ENCODE measurements at regions of chr4 and their contacts with region 1.

Region 1: GRCh38 chr4:89640620-89641366 is 196.2 kb downstream of the SNCA start:
- DNase-seq: peak; percentile 87
- ATAC-seq: peak; percentile 99
- H3K4me3 Mint-ChIP-seq: peak overlapping the region; percentile 55
- H3K27ac Mint-ChIP-seq: no peak overlapping the region; the same call in 1 of the 2 replicates
- H3K4me1 Mint-ChIP-seq: peaks cover 7% of the 10 kb centered on the region
- H3K27me3 Mint-ChIP-seq: peaks cover 3% of the 10 kb centered on the region; the same call in 1 of the 2 replicates
- CTCF ChIP-seq: peak; percentile 76

Region 2: DNA sequence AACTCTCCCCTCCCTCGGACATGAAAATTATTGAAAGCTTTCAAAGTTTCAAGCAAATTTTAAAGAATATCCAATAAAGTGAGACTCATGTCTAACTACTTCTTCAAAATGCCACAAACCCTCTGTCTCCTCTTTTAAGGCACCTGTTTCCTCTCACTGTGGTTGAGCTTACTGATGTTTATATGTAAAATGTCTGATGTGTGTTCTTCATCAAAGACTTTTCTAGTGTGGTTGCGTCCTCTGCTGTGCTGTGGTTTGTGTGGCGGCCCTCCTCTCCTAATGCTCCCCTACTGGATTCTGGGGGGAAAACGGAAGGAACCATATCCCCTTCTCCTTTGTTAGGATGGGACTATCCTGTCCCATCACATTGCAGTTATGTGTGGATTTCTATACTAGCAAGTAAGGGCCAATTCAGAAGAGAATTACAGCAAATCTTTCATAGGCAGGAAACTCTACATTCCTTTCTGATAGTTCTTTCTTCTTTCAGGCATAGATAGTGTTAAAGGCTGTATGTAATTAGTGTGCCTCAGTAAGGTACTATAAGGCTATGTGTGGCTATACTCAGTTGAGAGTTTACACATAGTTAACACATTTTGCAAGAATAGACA is 112.2 kb before region 1 on chr4:
- CTCF ChIA-PET with region 1: no interaction called
- POLR2A ChIA-PET with region 1: no interaction called
- DNase-seq: no peak
- ATAC-seq: no peak
- H3K4me3 Mint-ChIP-seq: no peak overlapping the region
- H3K27ac Mint-ChIP-seq: no peak overlapping the region
- H3K4me1 Mint-ChIP-seq: no peaks in the 10 kb centered on the region
- H3K27me3 Mint-ChIP-seq: peaks cover 6% of the 10 kb centered on the region; the same call in 1 of the 2 replicates
- CTCF ChIP-seq: no peak

Region 3: DNA sequence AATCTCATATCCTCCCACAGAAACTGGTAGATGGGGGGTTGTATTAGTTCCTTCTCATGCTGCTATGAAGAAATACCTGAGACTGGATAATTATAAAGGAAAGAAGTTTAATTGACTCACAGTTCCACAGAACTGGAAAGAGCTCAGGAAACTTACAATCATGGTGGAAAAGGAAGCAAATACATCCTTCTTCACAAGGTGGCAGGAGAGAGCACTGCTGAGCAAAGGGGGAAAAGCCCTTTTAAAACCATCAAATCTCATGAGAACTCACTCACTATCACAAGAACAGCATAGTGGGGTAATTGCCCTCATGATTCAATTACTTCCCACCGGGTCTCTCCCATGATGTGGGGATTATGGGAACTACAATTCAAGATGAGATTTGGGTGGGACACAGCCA is 82.6 kb before region 1 on chr4:
- CTCF ChIA-PET with region 1: interaction called, 19 read pairs
- POLR2A ChIA-PET with region 1: no interaction called
- DNase-seq: no peak
- ATAC-seq: 0 out of 2 replicates have a peak, but pooled peaks have one; percentile 33
- H3K4me3 Mint-ChIP-seq: no peak overlapping the region
- H3K27ac Mint-ChIP-seq: no peak overlapping the region
- H3K4me1 Mint-ChIP-seq: peaks cover 22% of the 10 kb centered on the region
- H3K27me3 Mint-ChIP-seq: peaks cover 34% of the 10 kb centered on the region
- CTCF ChIP-seq: no peak

Region 4: GRCh38 chr4:89625599-89626298 is 15.0 kb before region 1 on chr4:
- CTCF ChIA-PET with region 1: interaction called, 15 read pairs
- POLR2A ChIA-PET with region 1: no interaction called
- DNase-seq: no peak
- ATAC-seq: no peak
- H3K4me3 Mint-ChIP-seq: no peak overlapping the region
- H3K27ac Mint-ChIP-seq: no peak overlapping the region
- H3K4me1 Mint-ChIP-seq: no peaks in the 10 kb centered on the region
- H3K27me3 Mint-ChIP-seq: no peaks in the 10 kb centered on the region
- CTCF ChIP-seq: no peak

Region 5: GRCh38 chr4:89657931-89658700 is 17.3 kb after region 1 on chr4:
- CTCF ChIA-PET with region 1: interaction called, 17 read pairs
- POLR2A ChIA-PET with region 1: no interaction called
- DNase-seq: no peak
- ATAC-seq: 0 out of 2 replicates have a peak, but pooled peaks have one; percentile 38
- H3K4me3 Mint-ChIP-seq: no peak overlapping the region
- H3K27ac Mint-ChIP-seq: no peak overlapping the region
- H3K4me1 Mint-ChIP-seq: peaks cover 11% of the 10 kb centered on the region
- H3K27me3 Mint-ChIP-seq: no peaks in the 10 kb centered on the region
- CTCF ChIP-seq: no peak

Region 6: DNA sequence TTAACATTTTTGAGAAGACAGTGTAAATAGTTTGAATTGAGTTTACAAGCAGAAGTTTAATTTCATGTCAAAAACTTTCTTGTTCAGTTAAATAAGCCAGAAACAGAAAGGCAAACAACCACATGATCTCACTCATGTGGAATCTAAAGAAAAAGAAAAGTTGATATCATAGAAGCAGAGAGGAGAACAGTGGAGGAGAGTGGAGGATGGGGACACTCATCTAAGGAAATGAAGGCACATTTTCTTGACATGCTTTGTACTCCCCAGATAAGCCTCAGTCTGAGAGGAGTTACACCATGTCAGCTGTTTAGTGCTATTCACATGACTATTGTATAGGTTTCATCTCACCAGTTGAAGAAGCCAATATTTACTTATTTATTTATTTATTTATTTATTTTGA is 182.6 kb after region 1 on chr4:
- CTCF ChIA-PET with region 1: no interaction called
- POLR2A ChIA-PET with region 1: no interaction called
- DNase-seq: no peak
- ATAC-seq: no peak
- H3K4me3 Mint-ChIP-seq: no peak overlapping the region
- H3K27ac Mint-ChIP-seq: no peak overlapping the region
- H3K4me1 Mint-ChIP-seq: 0 out of 2 replicates have a peak, but pooled peaks cover 3% of the 10 kb centered on the region
- H3K27me3 Mint-ChIP-seq: no peaks in the 10 kb centered on the region
- CTCF ChIP-seq: no peak

Region 7: DNA sequence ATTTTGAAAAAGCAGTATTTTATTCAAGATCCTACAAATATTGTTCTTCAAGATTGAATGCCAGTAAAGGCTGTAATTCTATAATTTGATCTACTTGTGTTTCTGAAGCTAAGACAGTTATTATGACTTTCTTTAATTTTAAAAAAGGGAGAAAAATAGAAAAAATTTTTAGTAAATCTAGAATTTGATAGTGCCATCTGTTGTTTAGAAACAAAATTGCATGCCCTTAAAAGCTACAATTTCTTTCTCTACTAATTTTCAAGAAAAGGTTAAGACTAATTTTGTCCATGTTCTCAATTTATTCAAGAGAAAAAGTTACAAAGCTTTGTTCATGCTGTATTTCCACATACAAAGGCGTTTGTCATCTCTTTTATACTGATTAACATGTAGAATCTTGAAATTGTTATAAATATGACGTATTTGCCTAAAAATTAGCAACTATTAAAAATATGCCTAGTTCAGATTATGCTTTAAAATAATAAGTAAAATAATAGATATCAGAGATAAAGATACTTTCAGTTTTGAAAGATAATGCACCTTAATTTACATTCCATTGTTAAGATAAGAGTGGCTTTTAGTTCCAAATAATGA is 228.3 kb after region 1 on chr4:
- CTCF ChIA-PET with region 1: interaction called, 10 read pairs
- POLR2A ChIA-PET with region 1: no interaction called
- DNase-seq: no peak
- ATAC-seq: no peak
- H3K4me3 Mint-ChIP-seq: no peak overlapping the region
- H3K27ac Mint-ChIP-seq: no peak overlapping the region
- H3K4me1 Mint-ChIP-seq: no peaks in the 10 kb centered on the region
- H3K27me3 Mint-ChIP-seq: no peaks in the 10 kb centered on the region
- CTCF ChIP-seq: peak; percentile 31; the same call in 1 of the 2 replicates

Measured in WTC11 (cell line).